Caco-2 (cell line): ENCODE measurements at regions of chr7 and their contacts with region 1.

Region 1: DNA sequence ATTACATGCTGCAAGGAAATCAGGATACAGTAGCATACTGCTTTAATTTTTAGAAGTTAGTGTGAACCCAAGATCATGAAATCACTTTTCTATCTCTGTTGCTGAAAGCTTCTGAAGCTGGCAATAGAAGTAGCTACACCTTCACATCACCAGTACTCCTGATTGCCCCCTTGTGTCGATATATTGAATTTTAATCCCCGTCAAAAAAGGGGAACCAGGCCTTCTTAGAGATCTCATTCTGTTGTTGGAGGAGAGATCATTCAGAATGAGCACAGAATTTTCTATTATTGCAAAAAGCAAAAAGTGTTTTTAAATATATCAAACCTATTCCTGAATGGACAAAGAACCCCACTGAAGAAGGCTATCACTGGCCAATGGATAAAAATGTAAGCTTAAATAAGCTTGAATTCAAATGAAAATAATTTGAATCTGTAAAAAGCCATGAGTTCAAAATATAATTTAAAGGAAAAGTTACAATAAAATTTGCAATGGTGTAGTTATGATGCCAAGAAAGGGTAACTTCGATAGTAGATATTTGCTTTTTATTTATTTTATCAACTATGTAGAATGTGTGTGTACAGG is 39.7 kb upstream of the TEX47 start:
- DNase-seq: peak in 1 of 2 experiments; percentile 59
- H3K4me3 ChIP-seq: no peak overlapping the region
- H3K4me3 Mint-ChIP-seq: no peak overlapping the region
- H3K27ac Mint-ChIP-seq: no peak overlapping the region
- H3K4me1 ChIP-seq: no peaks in the 10 kb centered on the region
- H3K4me1 Mint-ChIP-seq: no peaks in the 10 kb centered on the region
- H3K27me3 ChIP-seq: no peaks in the 10 kb centered on the region
- H3K27me3 Mint-ChIP-seq: no peaks in the 10 kb centered on the region
- CTCF ChIP-seq: peak; percentile 53 to 55

Region 2: GRCh38 chr7:88546808-88547207 is 288.4 kb before region 1 on chr7:
- CTCF ChIA-PET with region 1: interaction called, 4 read pairs
- POLR2A ChIA-PET with region 1: no interaction called
- intact Hi-C with region 1: loop called (anchors 1 kb)
- DNase-seq: peak in 1 of 2 experiments; percentile 62
- H3K4me3 ChIP-seq: no peak overlapping the region
- H3K4me3 Mint-ChIP-seq: no peak overlapping the region
- H3K27ac Mint-ChIP-seq: no peak overlapping the region
- H3K4me1 ChIP-seq: no peaks in the 10 kb centered on the region
- H3K4me1 Mint-ChIP-seq: no peaks in the 10 kb centered on the region
- H3K27me3 ChIP-seq: no peaks in the 10 kb centered on the region
- H3K27me3 Mint-ChIP-seq: no peaks in the 10 kb centered on the region
- CTCF ChIP-seq: peak; percentile 33 to 45

Region 3: DNA sequence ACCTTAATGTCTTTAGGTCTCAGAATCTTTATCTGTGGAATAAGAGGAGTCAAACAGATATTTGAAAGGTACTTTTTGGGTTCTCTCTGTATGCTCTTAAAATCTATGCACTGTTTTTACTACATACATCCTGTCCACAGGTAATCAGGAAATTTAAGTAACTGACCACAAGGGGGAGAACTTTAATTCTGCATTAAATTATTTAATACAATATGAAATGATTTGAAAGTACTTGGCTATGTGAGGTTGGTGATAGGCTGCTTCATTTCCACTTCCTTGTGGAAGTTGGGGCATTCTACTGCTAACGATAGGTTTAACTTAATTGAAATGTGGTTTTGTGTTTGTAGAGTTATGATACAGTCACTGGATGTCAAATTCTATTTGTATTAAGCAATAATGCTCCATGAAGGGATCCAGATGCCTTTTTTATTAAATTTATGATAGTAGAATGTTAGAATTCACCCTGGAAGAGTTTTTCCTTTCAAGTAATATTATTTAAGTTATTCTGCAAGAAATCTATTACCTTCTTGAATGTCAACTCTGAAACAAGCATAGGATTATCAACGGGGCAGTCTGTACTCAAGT is 45.7 kb before region 1 on chr7:
- CTCF ChIA-PET with region 1: no interaction called
- POLR2A ChIA-PET with region 1: no interaction called
- intact Hi-C with region 1: loop called (anchors 2 kb)
- DNase-seq: no peak
- H3K4me3 ChIP-seq: no peak overlapping the region
- H3K4me3 Mint-ChIP-seq: no peak overlapping the region
- H3K27ac Mint-ChIP-seq: no peak overlapping the region
- H3K4me1 ChIP-seq: 0 out of 2 replicates have a peak, but pooled peaks cover 5% of the 10 kb centered on the region
- H3K4me1 Mint-ChIP-seq: no peaks in the 10 kb centered on the region
- H3K27me3 ChIP-seq: no peaks in the 10 kb centered on the region
- H3K27me3 Mint-ChIP-seq: peaks cover 3% of the 10 kb centered on the region
- CTCF ChIP-seq: peak; percentile 26 to 66